ENCODE measurements at regions of chr4 and their contacts with region 1.

Region 1: GRCh38 chr4:99885063-99885664 is 9.1 kb downstream of the LAMTOR3 start:
- DNase-seq: peak; percentile 23 to 62 (median 31)
- ATAC-seq: peak; percentile 72
- H3K4me3 ChIP-seq: no peak overlapping the region
- H3K27ac ChIP-seq: no peak overlapping the region
- H3K4me1 ChIP-seq: no peaks in the 10 kb centered on the region
- H3K27me3 ChIP-seq: no peaks in the 10 kb centered on the region
- CTCF ChIP-seq: peak; percentile 47 to 81 (median 50); a peak in 4 of 6 replicates
- EP300 ChIP-seq: no peak
- POLR2A ChIP-seq: no peak
- RAD21 ChIP-seq: peak; percentile 81 to 83

Region 2: DNA sequence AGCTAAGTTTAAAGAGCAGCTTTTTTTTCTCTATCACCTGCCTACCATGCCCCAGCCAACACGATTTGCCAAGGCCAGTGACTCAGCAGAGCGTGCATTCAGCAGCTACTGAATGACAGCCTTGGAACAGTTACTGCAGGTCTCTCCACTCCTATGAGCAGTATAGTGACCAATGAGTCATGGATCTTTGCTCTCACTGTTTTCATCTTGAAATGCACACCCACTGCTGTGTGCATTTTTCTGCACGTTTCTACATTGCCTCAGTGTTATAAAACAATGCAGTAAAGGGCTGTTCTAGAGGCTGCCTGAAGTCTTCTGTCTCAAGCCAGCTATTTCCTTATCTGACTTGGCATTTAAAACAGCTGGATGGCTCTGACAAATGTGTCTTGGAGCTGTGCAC is 161.6 kb before region 1 on chr4:
- CTCF ChIA-PET with region 1: no interaction called
- POLR2A ChIA-PET with region 1: no interaction called
- in situ Hi-C with region 1: no loop called
- intact Hi-C with region 1: loop called (anchors 5 kb)
- DNase-seq: peak; percentile 17 to 88 (median 50)
- ATAC-seq: peak; percentile 98
- H3K4me3 ChIP-seq: no peak overlapping the region; the same call in 1 of the 2 replicates
- H3K27ac ChIP-seq: peak overlapping the region; percentile 55; the same call in 2 of the 3 replicates
- H3K4me1 ChIP-seq: peaks cover 4 to 18% of the 10 kb centered on the region in 2 experiments; a peak in 4 of 5 replicates
- H3K27me3 ChIP-seq: no peaks in the 10 kb centered on the region
- CTCF ChIP-seq: no peak
- EP300 ChIP-seq: no peak; the same call in 1 of the 2 replicates
- POLR2A ChIP-seq: no peak
- RAD21 ChIP-seq: no peak

Measured in K562 (cell line).